ENCODE measurements at regions of chr14 and their contacts with region 1.

Region 1: DNA sequence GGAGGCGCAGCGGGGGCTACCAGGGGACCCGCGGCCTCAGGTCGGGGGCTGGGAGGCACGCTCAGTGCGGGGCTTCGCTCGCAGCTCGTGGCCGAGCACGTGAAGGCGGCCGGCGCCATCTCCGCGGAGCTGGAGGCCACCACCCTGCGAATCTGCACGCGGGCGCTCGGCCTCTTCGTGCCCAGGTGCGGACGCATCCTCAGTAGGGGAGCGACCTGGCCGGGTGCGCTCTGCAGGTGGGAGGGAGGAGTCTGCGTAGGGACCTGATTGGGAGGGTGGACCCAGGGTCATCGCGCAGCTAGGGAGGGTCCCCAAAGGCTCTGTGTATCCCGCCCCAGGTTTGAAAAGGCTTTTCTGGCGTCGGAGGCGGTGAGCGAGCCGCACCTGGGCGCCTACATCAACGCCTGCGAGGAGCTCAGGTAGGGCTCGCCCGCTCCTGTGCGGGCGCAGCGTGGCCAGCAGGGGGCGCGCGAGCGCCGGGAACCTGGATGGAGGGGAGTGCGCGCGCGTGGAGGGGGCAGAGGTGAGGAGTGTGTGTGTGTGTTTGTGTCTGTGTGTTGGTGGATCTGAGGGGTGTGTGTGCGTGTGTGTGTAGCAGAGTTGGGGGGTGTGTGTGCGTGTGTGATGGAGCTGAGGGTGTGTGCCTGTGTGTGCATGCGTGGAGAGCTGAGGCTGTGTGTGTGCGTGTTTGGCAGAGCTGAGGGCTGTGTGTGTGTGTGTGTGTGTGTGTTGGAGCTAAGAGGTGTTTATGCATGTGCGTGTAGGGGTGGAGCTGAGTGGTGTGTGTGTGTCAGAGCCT is 10.3 kb downstream of the EXOC3L4 start:
- DNase-seq: peak; percentile 85
- ATAC-seq: peak; percentile 75
- H3K4me3 Mint-ChIP-seq: peak overlapping the region; percentile 30
- H3K27ac Mint-ChIP-seq: no peak overlapping the region
- H3K4me1 Mint-ChIP-seq: peaks cover 26% of the 10 kb centered on the region
- H3K27me3 Mint-ChIP-seq: peaks cover 54% of the 10 kb centered on the region
- CTCF ChIP-seq: peak; percentile 98

Region 2: GRCh38 chr14:102868956-102869547 is 235.8 kb before region 1 on chr14:
- CTCF ChIA-PET with region 1: no interaction called
- POLR2A ChIA-PET with region 1: no interaction called
- DNase-seq: no peak
- ATAC-seq: no peak
- H3K4me3 Mint-ChIP-seq: no peak overlapping the region
- H3K27ac Mint-ChIP-seq: no peak overlapping the region
- H3K4me1 Mint-ChIP-seq: peaks cover 5% of the 10 kb centered on the region; the same call in 1 of the 2 replicates
- H3K27me3 Mint-ChIP-seq: no peaks in the 10 kb centered on the region; the same call in 1 of the 2 replicates
- CTCF ChIP-seq: no peak

Region 3: GRCh38 chr14:102993529-102993928 is 111.3 kb before region 1 on chr14:
- CTCF ChIA-PET with region 1: no interaction called
- POLR2A ChIA-PET with region 1: no interaction called
- DNase-seq: no peak
- ATAC-seq: no peak
- H3K4me3 Mint-ChIP-seq: no peak overlapping the region
- H3K27ac Mint-ChIP-seq: peak overlapping the region; percentile 5; the same call in 1 of the 2 replicates
- H3K4me1 Mint-ChIP-seq: no peaks in the 10 kb centered on the region
- H3K27me3 Mint-ChIP-seq: no peaks in the 10 kb centered on the region
- CTCF ChIP-seq: no peak

Region 4: DNA sequence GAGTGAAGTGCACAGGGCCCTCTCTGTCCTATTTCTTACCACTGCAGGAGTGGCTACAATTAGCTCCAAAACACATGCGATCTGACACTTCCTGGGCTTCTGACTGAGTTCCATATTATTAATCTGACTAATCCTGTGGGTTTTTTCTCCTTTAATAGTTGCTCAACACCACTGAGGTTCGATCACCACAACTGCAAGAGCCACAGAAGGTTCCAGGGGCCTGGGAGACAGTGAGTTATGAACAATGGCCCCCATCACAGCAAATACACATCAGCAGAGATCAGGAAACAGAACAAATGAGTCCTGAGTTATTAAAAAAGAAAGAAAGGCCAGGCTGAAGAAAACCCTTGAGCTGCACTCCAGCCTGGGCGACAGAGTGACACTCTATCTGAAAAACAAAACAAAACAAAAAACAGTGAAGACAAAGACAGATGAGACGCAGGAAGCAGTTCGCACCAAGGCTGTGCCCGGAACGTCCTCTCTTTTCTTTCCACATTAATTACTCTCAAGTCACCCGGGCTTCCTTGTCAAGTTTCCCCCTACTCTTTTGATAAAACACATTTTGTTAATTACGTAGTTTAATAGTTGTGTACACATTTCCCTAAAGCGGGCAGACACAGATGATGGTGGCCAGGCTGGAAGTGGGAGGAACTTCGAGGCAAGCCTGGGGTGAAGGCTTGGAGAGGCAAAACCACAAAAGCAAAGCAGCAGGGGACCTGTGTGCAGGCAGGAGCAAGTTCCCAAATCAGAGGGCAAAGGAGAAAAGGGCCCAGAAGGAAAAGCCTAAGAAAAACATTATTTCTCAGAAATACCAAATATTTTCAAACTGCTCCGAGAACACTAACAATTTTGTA is 90.2 kb before region 1 on chr14:
- CTCF ChIA-PET with region 1: no interaction called
- POLR2A ChIA-PET with region 1: no interaction called
- DNase-seq: no peak
- ATAC-seq: peak; percentile 70
- H3K4me3 Mint-ChIP-seq: no peak overlapping the region
- H3K27ac Mint-ChIP-seq: peak overlapping the region; percentile 82
- H3K4me1 Mint-ChIP-seq: peaks cover 30% of the 10 kb centered on the region
- H3K27me3 Mint-ChIP-seq: no peaks in the 10 kb centered on the region
- CTCF ChIP-seq: no peak

Region 5: GRCh38 chr14:103057365-103058096 is 47.3 kb before region 1 on chr14 and contains the start of gene CDC42BPB:
- CTCF ChIA-PET with region 1: interaction called, 17 read pairs
- POLR2A ChIA-PET with region 1: no interaction called
- DNase-seq: peak; percentile 85
- ATAC-seq: peak; percentile 96
- H3K4me3 Mint-ChIP-seq: peak within 1 kb of the TSS; percentile 84
- H3K27ac Mint-ChIP-seq: no peak within 1 kb of the TSS
- H3K4me1 Mint-ChIP-seq: peaks cover 27% of the 10 kb centered on the region
- H3K27me3 Mint-ChIP-seq: no peaks in the 10 kb centered on the region; the same call in 1 of the 2 replicates
- CTCF ChIP-seq: no peak
- total RNA-seq, gene CDC42BPB: 87.1 to 96.9 TPM (median 87.3 TPM) in 3 replicates

Region 6: DNA sequence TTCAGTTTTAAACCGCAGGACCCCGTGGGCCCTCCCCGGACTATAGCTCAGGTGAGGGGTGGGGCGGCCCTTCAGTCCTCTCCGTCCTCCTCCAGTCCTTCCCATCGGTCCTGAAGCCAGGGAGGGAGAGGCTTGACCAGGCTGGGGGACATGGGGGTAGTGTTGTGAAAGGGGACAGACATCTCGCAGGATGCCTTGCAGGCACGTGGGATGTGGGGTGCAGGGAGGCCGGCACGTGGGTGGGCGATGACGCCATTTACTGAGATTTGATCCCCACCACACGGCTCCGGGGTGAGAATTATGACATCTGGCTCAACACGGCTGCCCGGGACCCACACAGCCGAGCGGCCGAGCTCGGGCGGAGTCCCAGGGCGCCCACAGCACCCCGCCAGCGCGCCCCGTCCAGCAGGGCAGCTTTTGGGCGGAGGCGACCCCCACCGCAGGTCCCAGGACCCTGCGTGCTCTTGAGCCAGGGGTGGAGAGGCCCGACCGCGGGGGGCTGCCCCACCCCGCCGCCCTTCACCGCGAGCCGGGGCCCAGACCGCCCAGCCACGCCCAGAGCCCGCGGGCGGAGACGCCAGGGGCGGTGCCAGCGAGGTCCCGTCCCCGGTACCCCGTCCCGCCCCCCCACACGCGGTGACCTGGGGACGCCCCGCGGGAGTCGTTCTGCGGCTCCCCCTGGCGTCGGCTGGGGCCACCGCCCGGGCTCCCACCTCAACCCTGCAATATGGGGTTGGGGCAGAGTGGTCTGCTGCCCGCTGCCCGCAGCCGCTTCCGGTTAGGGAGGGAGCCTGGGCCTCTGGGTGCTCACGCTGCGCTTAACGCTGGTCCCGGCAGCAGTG is 13.6 kb before region 1 on chr14:
- CTCF ChIA-PET with region 1: interaction called, 65 read pairs
- POLR2A ChIA-PET with region 1: no interaction called
- DNase-seq: peak; percentile 66
- ATAC-seq: peak; percentile 65
- H3K4me3 Mint-ChIP-seq: peak overlapping the region; percentile 63
- H3K27ac Mint-ChIP-seq: no peak overlapping the region
- H3K4me1 Mint-ChIP-seq: 0 out of 2 replicates have a peak, but pooled peaks cover 4% of the 10 kb centered on the region
- H3K27me3 Mint-ChIP-seq: peaks cover 9% of the 10 kb centered on the region
- CTCF ChIP-seq: peak; percentile 20; the same call in 1 of the 2 replicates

Region 7: GRCh38 chr14:103141119-103141796 is 36.4 kb after region 1 on chr14:
- CTCF ChIA-PET with region 1: interaction called, 126 read pairs
- POLR2A ChIA-PET with region 1: interaction called, 4 read pairs
- DNase-seq: peak; percentile 90
- ATAC-seq: peak; percentile 63
- H3K4me3 Mint-ChIP-seq: peak overlapping the region; percentile 33; the same call in 1 of the 2 replicates
- H3K27ac Mint-ChIP-seq: no peak overlapping the region
- H3K4me1 Mint-ChIP-seq: peaks cover 31% of the 10 kb centered on the region
- H3K27me3 Mint-ChIP-seq: peaks cover 21% of the 10 kb centered on the region
- CTCF ChIP-seq: peak; percentile 77

Region 8: DNA sequence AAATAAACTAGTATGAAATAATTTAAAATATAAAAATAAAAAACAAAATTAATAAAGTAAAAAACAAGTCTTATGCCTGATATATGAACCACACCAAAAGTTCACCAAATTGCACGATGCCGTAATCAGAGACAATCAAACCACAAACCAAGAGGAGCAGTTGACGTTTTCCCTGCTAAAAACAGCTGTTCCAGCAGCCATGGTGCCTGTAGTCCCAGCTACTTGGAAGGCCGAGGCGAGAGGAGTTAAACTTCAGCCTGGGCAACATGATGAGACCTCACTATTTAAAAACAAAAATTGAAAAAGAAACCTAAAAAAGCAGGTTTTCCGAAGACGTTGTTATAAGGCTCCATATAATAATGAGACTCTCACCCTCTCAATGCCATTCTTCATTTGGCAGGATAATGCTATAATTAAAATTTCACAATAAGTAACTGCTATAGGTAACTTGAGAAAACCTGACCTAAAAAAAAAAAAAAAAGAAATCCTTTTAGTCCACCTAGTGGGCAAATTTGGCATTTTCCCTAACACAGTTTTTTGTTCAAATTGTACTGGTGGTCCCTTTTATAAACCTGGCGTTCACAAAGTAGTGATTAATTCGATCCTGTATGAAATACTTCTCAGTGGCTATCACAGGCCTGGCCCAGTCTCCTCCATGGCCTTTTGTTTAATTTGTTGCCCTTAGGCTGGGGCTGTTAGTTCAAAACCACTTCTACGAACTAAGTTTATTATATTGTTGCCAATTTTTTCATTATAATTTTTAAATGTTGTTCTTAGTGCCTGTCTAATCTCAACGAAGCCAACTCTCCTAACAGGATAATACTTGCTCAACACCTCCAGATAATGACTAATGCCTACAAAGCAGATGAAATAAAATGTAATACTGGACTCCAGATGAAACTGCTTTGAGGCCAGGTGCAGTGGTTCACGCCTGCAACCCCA is 80.5 kb after region 1 on chr14:
- CTCF ChIA-PET with region 1: interaction called, 38 read pairs
- POLR2A ChIA-PET with region 1: interaction called, 4 read pairs
- DNase-seq: no peak
- ATAC-seq: no peak
- H3K4me3 Mint-ChIP-seq: no peak overlapping the region
- H3K27ac Mint-ChIP-seq: peak overlapping the region; percentile 49; the same call in 1 of the 2 replicates
- H3K4me1 Mint-ChIP-seq: peaks cover 31% of the 10 kb centered on the region
- H3K27me3 Mint-ChIP-seq: peaks cover 27% of the 10 kb centered on the region
- CTCF ChIP-seq: peak; percentile 62

Region 9: DNA sequence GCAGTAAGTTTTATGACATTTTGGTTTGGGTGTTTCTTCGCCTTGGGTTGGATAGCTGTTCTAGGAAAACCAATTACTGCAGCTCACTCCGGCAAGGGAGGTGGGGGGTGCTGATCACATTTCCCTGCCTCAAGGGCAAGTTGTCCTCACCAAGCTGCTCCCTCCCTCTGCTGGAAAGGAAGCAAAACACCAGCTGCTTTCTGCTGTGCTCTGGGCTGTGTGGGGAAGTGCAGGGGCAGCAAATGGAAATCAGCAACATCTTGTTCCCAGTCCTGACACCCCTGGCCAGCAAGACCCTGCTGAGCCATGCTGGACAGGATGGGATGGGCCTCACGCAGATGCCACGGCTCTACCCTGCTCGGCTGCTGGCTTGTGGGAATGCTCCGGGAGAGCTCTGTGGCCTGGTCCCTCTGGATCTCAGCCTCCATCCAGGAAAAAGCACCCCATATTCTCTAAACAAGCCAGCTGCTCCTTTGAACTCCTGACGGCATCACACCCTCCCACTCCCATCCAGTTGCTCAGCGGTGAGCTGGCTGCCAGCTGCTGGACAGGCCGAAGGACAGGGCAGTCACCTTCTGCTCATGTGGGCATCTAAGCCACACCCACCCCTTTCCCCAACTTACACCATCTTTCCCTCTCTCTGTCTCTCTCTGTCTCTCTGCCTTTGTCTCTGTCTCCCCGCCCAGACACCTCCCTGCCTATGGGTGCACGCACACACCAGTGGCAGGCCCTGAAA is 176.8 kb after region 1 on chr14:
- CTCF ChIA-PET with region 1: interaction called, 59 read pairs
- POLR2A ChIA-PET with region 1: no interaction called
- DNase-seq: peak; percentile 59
- ATAC-seq: peak; percentile 58
- H3K4me3 Mint-ChIP-seq: no peak overlapping the region
- H3K27ac Mint-ChIP-seq: no peak overlapping the region
- H3K4me1 Mint-ChIP-seq: peaks cover 48% of the 10 kb centered on the region
- H3K27me3 Mint-ChIP-seq: peaks cover 52% of the 10 kb centered on the region
- CTCF ChIP-seq: no peak

Region 10: DNA sequence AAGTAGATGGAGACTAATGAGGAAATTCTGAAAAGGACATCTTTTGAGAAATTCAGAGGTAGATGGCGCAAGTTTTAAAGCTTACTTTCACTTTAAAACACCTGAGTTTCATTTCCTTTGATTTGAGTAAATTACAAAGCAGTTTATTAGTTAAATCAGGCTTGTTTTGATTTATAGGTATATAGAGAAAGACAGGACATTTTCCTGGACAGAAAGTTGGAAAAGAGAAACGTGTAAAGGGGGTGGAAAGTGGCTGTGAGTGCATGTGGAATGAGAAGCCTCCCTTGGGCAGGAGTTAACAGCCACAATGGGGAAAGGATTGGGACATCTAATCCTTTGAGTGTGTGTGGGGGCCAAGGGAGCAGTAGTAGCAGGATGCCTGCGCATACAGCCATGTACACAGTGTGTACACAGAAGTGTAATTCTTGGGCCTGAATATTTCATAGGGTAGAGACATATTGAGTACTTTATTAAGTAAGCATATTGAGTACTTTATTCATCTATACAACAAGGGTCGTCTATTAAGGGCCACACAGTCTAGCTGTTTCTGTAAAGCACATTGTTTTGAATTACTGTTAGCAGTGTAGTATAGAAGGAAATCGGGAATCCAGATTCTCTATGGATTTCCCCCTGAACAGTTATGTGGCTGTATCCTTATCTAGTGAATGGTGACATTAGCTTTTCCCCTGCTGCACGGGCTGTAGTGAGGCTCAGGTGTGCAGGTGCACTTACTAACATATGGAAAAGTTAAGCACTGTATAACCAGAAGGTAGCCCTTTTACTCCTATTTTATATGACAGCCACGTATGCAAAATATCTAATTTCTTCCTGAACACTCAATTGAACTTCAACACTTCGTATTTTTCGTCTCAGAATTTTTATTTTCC is 299.4 kb after region 1 on chr14:
- CTCF ChIA-PET with region 1: no interaction called
- POLR2A ChIA-PET with region 1: no interaction called
- DNase-seq: no peak
- ATAC-seq: no peak
- H3K4me3 Mint-ChIP-seq: no peak overlapping the region
- H3K27ac Mint-ChIP-seq: peak overlapping the region; percentile 20
- H3K4me1 Mint-ChIP-seq: peaks cover 43% of the 10 kb centered on the region
- H3K27me3 Mint-ChIP-seq: no peaks in the 10 kb centered on the region
- CTCF ChIP-seq: no peak

Region 11: GRCh38 chr14:103520657-103521437 is 416.0 kb after region 1 on chr14:
- CTCF ChIA-PET with region 1: interaction called, 11 read pairs
- POLR2A ChIA-PET with region 1: no interaction called
- DNase-seq: peak; percentile 79
- ATAC-seq: peak; percentile 8
- H3K4me3 Mint-ChIP-seq: peak overlapping the region; percentile 54
- H3K27ac Mint-ChIP-seq: no peak overlapping the region
- H3K4me1 Mint-ChIP-seq: peaks cover 22% of the 10 kb centered on the region
- H3K27me3 Mint-ChIP-seq: peaks cover 27% of the 10 kb centered on the region
- CTCF ChIP-seq: peak; percentile 35; the same call in 1 of the 2 replicates

Measured in WTC11 (cell line).